Right ventricle myocardium inferior (tissue), 1 donor: ENCODE measurements at regions of chr2 and their contacts with region 1.

Region 1: GRCh38 chr2:174771631-174772471 is 7.6 kb upstream of the CHRNA1 start:
- DNase-seq: peak; percentile 86
- ATAC-seq: peak; percentile 95

Region 2: GRCh38 chr2:174985630-174986029 is 213.8 kb after region 1 on chr2:
- intact Hi-C with region 1: loop called (anchors 1 kb)
- DNase-seq: no peak
- ATAC-seq: no peak